ENCODE measurements at regions of chr21 and their contacts with region 1.

Region 1: GRCh38 chr21:42258153-42258884 is 39.4 kb downstream of the ABCG1 start:
- DNase-seq: peak; percentile 74 to 90 (median 81)
- ATAC-seq: peak; percentile 92
- H3K4me3 ChIP-seq: no peak overlapping the region
- H3K4me3 Mint-ChIP-seq: no peak overlapping the region
- H3K27ac ChIP-seq: no peak overlapping the region
- H3K27ac Mint-ChIP-seq: peak overlapping the region; percentile 65
- H3K4me1 ChIP-seq: peaks cover 20% of the 10 kb centered on the region
- H3K4me1 Mint-ChIP-seq: peaks cover 46% of the 10 kb centered on the region
- H3K27me3 ChIP-seq: no peaks in the 10 kb centered on the region
- H3K27me3 Mint-ChIP-seq: no peaks in the 10 kb centered on the region
- CTCF ChIP-seq: peak; percentile 91

Region 2: DNA sequence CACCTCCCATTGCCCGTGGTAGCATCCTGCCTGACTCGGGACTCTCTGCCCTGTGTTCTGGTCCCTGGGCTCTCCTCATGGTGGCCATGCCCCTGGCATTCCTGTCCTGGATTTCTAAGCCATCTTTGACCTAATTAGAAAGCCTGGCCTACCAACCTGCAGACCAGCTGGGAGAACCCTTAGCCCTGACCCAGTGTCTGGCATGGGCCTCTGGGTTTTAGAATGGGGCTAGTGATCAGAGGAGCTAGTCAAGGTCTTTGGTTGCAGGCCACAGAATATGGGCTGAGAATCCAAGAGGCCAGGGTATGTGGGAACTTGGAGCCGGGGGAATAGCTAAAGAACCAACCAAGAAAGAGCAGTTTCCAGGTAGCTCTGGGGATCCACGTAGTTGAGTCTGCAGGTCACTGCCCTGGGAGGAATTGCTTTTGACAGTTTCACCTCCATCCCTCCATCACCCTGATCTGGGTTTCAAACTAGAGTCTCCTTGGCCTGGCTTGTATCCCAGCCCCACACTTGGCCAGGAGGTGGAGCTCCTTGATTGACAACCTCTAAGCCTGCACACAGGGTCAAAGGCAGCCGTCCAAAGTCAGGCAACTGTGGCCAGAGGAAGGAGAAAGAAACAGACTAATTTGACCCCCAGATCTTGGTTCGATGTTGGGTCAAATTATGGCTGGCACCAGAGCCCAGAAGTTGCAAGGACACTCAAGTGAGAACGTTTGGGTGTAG is 94.1 kb before region 1 on chr21:
- CTCF ChIA-PET with region 1: interaction called, 20 read pairs
- POLR2A ChIA-PET with region 1: interaction called, 3 read pairs
- intact Hi-C with region 1: loop called (anchors 1 kb)
- DNase-seq: peak; percentile 22 to 78 (median 50)
- ATAC-seq: peak; percentile 34
- H3K4me3 ChIP-seq: no peak overlapping the region
- H3K4me3 Mint-ChIP-seq: no peak overlapping the region
- H3K27ac ChIP-seq: no peak overlapping the region
- H3K27ac Mint-ChIP-seq: peak overlapping the region; percentile 56
- H3K4me1 ChIP-seq: peaks cover 31% of the 10 kb centered on the region
- H3K4me1 Mint-ChIP-seq: peaks cover 56% of the 10 kb centered on the region
- H3K27me3 ChIP-seq: no peaks in the 10 kb centered on the region
- H3K27me3 Mint-ChIP-seq: no peaks in the 10 kb centered on the region
- CTCF ChIP-seq: peak; percentile 62

Region 3: GRCh38 chr21:42199488-42200458 is 58.5 kb before region 1 on chr21:
- CTCF ChIA-PET with region 1: interaction called, 8 read pairs
- POLR2A ChIA-PET with region 1: interaction called, 3 read pairs
- intact Hi-C with region 1: loop called in 1 of 2 experiments (anchors 1 kb)
- DNase-seq: peak in 5 of 14 experiments; percentile 30 to 77 (median 71)
- ATAC-seq: peak; percentile 84
- H3K4me3 ChIP-seq: no peak overlapping the region
- H3K4me3 Mint-ChIP-seq: peak overlapping the region; percentile 31
- H3K27ac ChIP-seq: peak overlapping the region in 1 of 2 donors; percentile 64
- H3K27ac Mint-ChIP-seq: peak overlapping the region; percentile 94
- H3K4me1 ChIP-seq: peaks cover 33% of the 10 kb centered on the region
- H3K4me1 Mint-ChIP-seq: peaks cover 71% of the 10 kb centered on the region
- H3K27me3 ChIP-seq: no peaks in the 10 kb centered on the region
- H3K27me3 Mint-ChIP-seq: no peaks in the 10 kb centered on the region
- CTCF ChIP-seq: no peak

Region 4: GRCh38 chr21:42238185-42238934 is 20.0 kb before region 1 on chr21:
- CTCF ChIA-PET with region 1: interaction called, 30 read pairs
- POLR2A ChIA-PET with region 1: interaction called, 6 read pairs
- intact Hi-C with region 1: loop called in 1 of 2 experiments (anchors 2 kb)
- DNase-seq: peak in 13 of 14 experiments; percentile 13 to 90 (median 43)
- ATAC-seq: peak; percentile 35
- H3K4me3 ChIP-seq: peak overlapping the region; percentile 25
- H3K4me3 Mint-ChIP-seq: peak overlapping the region; percentile 76
- H3K27ac ChIP-seq: peak overlapping the region; percentile 83 to 94
- H3K27ac Mint-ChIP-seq: peak overlapping the region; percentile 90
- H3K4me1 ChIP-seq: peaks cover 80% of the 10 kb centered on the region
- H3K4me1 Mint-ChIP-seq: peaks cover 76% of the 10 kb centered on the region
- H3K27me3 ChIP-seq: no peaks in the 10 kb centered on the region
- H3K27me3 Mint-ChIP-seq: no peaks in the 10 kb centered on the region
- CTCF ChIP-seq: no peak